Activated CD4-positive, alpha-beta memory T cell treated with anti-CD3 and anti-CD28 coated beads, Interleukin-2, amount 10 ng/mL, durations not matched to agents 7 days and 5 days (primary cell): ENCODE measurements at regions of chr15 and their contacts with region 1.

Region 1: DNA sequence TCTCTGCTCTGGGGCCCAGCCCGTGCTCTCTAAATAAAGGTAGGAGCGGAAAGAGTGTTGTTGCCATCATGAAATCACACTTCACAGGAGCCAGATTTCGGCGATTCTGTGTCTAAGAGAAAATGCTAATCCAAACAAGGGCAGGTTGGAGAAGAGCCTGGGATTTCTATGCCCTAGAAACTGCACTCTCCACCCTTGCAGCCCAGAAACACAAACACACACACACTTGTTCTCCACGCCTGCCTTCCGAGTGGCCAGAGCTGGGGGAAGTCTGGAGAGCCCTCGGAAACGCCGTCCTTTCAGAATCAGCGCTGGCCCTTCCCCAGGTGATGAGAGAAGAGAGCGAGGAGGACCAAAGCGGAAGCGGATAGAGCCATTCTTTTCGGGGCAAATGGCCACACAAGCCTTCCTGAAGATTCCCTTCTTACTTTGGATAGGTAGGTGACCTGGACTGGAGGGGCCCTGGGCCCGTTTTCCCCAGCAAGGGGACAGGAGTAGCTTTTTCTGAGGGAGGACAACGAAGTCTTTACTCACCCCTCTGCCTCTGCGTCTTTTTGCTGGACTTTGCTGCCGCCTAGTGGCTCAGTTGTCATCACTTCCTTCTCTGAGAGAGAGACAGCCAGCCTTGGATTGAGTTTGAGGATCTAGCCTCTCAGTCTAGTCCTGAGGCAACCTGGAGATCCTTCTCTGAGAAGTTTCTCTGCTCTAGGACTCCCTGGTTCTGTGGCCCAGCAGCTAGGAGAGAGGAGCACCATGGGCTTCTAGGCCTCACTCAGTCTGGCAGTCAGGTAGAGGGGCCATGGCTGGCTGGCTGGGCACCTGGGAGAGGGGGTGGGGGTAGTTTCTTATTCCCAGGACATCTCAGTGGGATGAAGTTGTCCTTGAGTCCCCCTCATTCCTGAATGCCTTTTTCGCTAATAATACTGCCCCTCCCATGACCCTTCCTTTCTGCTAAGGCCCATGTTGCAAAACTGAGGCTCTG is 37.7 kb downstream of the SENP8 start:
- DNase-seq: peak; percentile 86
- H3K4me3 Mint-ChIP-seq: peak overlapping the region; percentile 61
- H3K27ac Mint-ChIP-seq: no peak overlapping the region
- H3K4me1 Mint-ChIP-seq: peaks cover 8% of the 10 kb centered on the region
- H3K27me3 Mint-ChIP-seq: peaks cover 4% of the 10 kb centered on the region

Region 2: GRCh38 chr15:71743861-71744382 is 412.0 kb before region 1 on chr15:
- CTCF ChIA-PET with region 1: interaction called, 36 read pairs
- POLR2A ChIA-PET with region 1: no interaction called
- DNase-seq: peak; percentile 61
- H3K4me3 Mint-ChIP-seq: no peak overlapping the region
- H3K27ac Mint-ChIP-seq: no peak overlapping the region
- H3K4me1 Mint-ChIP-seq: peaks cover 4% of the 10 kb centered on the region
- H3K27me3 Mint-ChIP-seq: peaks cover 24% of the 10 kb centered on the region

Region 3: GRCh38 chr15:71752604-71753289 is 403.2 kb before region 1 on chr15:
- CTCF ChIA-PET with region 1: interaction called, 11 read pairs
- POLR2A ChIA-PET with region 1: no interaction called
- DNase-seq: peak; percentile 38
- H3K4me3 Mint-ChIP-seq: no peak overlapping the region
- H3K27ac Mint-ChIP-seq: no peak overlapping the region
- H3K4me1 Mint-ChIP-seq: peaks cover 8% of the 10 kb centered on the region
- H3K27me3 Mint-ChIP-seq: peaks cover 13% of the 10 kb centered on the region

Region 4: DNA sequence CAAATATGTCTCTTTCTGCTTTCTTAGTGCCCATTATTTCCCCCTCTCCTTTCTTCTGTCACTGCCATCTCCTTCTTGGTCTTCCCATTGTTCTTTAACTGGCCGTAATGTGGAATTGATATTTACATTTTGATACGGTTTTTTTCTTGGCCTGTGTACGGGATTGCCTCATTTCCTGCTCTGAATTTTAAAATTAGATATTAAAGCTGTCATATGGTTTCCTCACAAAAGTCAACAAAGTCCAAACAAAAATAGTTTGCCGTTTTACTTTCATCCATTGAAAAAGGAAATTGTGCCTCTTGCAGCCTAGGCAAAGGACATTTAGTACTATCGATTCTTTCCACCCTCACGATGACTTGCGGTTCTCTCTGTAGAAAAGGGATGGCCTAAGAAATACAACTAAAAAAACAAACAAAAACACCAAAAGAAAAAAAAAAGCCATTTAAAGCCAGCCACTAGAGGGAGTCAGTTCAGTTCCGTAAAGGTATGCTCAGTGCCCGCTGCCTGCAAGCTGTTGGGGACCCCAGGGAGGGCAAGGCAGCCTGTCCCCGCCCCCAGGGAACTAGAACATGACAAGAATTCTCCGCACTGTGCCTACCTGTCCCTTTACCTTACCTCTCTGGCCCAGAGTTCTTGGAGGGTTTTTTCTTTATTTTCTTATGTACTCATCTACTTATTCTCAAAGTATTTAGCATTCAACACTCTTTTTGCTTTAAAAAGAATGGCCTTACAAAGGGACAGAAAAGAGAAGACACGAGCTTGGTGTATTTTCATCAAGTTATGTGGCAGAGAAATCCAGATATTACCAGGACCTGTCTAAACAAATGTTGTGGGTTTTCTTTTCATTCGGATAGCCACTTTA is 375.6 kb before region 1 on chr15:
- CTCF ChIA-PET with region 1: interaction called, 22 read pairs
- POLR2A ChIA-PET with region 1: no interaction called
- DNase-seq: peak; percentile 44
- H3K4me3 Mint-ChIP-seq: no peak overlapping the region
- H3K27ac Mint-ChIP-seq: peak overlapping the region; percentile 53
- H3K4me1 Mint-ChIP-seq: peaks cover 22% of the 10 kb centered on the region
- H3K27me3 Mint-ChIP-seq: peaks cover 3% of the 10 kb centered on the region

Region 5: DNA sequence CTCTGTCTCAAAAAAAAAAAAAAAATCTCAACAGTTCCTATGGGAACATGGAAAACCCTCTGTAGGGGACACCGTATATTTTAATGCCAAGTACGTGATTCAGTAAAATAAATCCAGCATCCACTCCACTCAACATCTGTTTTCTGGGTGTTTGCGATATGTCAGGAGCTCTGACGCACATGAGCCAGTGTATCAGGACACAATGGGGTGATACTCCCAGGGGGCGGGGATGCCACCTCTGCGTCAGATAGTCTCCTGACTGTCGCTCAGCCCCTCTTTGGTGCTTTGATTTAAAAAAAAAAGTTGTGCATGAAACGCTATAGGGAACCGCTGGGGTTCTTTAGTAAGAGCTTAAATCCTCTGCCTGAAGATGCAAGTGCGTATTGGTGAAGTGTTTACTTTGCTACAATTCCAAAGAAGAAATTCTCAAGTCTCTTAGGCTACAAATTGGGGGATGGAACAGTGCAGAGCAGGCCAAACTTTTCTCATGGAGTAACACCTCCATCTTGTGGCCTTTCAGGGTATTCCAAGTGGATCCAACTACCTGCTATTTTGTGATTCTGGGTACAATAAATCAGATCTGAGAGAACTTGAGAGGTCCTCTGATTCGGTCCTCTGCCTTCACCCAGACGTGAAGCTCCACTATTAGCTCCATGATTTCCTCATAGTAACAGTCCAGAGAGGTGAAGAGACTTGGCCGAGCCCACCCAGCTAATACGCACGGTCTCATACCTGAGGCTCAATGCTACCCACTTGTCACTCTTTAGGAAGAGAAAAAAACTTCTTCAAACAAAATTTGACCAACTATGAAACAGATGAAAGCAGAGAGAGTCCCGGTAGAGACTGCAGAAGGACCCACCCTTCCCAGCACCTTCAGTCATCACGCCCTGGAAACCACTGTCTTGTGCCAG is 354.8 kb before region 1 on chr15:
- CTCF ChIA-PET with region 1: interaction called, 14 read pairs
- POLR2A ChIA-PET with region 1: no interaction called
- DNase-seq: peak; percentile 30
- H3K4me3 Mint-ChIP-seq: no peak overlapping the region
- H3K27ac Mint-ChIP-seq: no peak overlapping the region
- H3K4me1 Mint-ChIP-seq: no peaks in the 10 kb centered on the region
- H3K27me3 Mint-ChIP-seq: peaks cover 6% of the 10 kb centered on the region

Region 6: GRCh38 chr15:72168111-72168808 is 12.3 kb after region 1 on chr15:
- CTCF ChIA-PET with region 1: interaction called, 12 read pairs
- POLR2A ChIA-PET with region 1: no interaction called
- DNase-seq: peak; percentile 31
- H3K4me3 Mint-ChIP-seq: no peak overlapping the region
- H3K27ac Mint-ChIP-seq: no peak overlapping the region
- H3K4me1 Mint-ChIP-seq: peaks cover 15% of the 10 kb centered on the region
- H3K27me3 Mint-ChIP-seq: no peaks in the 10 kb centered on the region